ENCODE measurements at regions of chr11 and their contacts with region 1.

Region 1: DNA sequence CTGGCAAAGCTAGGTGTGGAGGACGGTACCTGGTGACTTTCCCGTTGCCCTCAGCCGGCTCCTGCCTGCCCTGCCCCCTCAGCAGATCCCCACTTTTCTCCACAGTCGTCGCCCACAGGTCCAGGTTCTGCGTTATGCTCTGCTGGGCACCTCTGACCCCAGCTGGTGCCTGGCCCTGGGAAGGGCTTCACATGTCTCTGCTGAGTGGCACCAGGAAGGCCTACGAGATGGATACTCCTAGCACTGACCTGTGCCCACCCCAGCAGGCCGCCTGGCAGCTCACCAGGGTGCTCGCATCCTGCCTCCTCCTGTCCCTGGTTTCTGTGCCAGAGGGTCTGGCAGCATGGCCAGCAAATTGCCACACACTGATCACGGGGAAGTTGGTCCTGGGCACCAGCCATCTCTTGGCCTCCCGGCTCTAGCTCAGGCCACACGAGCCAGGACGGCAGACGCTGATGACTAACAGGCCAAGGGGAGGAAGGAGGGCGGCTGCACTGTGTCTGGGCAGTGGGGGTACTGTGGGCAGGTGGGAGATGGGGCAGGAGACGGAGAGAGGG is 13.8 kb downstream of the CARS1 start:
- DNase-seq: peak; percentile 91 to 99
- ATAC-seq: peak; percentile 63 to 65
- H3K4me3 ChIP-seq: peak overlapping the region in 2 of 4 donors; percentile 25 to 33
- H3K27ac ChIP-seq: peak overlapping the region; percentile 92 to 99 (median 98)
- H3K4me1 ChIP-seq: peaks cover 49 to 60% of the 10 kb centered on the region in 2 donors
- H3K27me3 ChIP-seq: no peaks in the 10 kb centered on the region
- CTCF ChIP-seq: no peak
- POLR2A ChIP-seq: peak in 1 of 2 donors; percentile 4

Region 2: DNA sequence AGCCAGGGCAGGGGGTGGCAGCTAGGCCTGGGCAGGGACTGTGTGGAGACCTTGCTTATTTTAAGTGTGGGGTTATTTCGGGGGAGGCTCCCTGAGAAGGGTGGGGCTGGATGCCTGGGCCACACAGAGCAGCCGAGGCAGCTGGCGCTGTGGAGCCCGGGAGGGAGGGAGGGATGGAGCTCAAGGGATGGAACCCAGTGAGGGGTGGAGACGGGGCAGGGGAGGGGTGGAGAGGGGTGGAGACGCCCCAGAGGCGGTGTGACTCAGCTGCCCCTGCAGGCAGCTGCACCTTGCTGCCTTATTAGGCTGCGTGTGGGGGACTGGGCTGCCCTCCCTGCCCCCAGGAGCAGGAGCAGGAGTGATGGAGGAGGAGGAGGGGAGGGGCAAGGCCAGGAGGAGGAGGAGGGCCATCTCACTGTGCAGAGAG is 652.7 kb before region 1 on chr11:
- in situ Hi-C with region 1: no loop called
- intact Hi-C with region 1: loop called (anchors 5 kb)
- DNase-seq: peak; percentile 27 to 65
- ATAC-seq: peak in 1 of 2 donors; percentile 5
- H3K4me3 ChIP-seq: no peak overlapping the region
- H3K27ac ChIP-seq: peak overlapping the region; percentile 82 to 89 (median 86)
- H3K4me1 ChIP-seq: peaks cover 53 to 56% of the 10 kb centered on the region in 2 donors
- H3K27me3 ChIP-seq: no peaks in the 10 kb centered on the region
- CTCF ChIP-seq: no peak
- POLR2A ChIP-seq: no peak

Region 3: GRCh38 chr11:2991452-2992233 is 51.8 kb before region 1 on chr11:
- in situ Hi-C with region 1: no loop called
- intact Hi-C with region 1: loop called (anchors 2 kb)
- DNase-seq: peak in 1 of 2 donors; percentile 32
- ATAC-seq: peak; percentile 68 to 79
- H3K4me3 ChIP-seq: peak overlapping the region; percentile 76 to 92 (median 88)
- H3K27ac ChIP-seq: peak overlapping the region; percentile 87 to 98 (median 96)
- H3K4me1 ChIP-seq: peaks cover 46 to 57% of the 10 kb centered on the region in 2 donors
- H3K27me3 ChIP-seq: no peaks in the 10 kb centered on the region
- CTCF ChIP-seq: peak in 1 of 5 experiments; percentile 11
- POLR2A ChIP-seq: no peak

Region 4: DNA sequence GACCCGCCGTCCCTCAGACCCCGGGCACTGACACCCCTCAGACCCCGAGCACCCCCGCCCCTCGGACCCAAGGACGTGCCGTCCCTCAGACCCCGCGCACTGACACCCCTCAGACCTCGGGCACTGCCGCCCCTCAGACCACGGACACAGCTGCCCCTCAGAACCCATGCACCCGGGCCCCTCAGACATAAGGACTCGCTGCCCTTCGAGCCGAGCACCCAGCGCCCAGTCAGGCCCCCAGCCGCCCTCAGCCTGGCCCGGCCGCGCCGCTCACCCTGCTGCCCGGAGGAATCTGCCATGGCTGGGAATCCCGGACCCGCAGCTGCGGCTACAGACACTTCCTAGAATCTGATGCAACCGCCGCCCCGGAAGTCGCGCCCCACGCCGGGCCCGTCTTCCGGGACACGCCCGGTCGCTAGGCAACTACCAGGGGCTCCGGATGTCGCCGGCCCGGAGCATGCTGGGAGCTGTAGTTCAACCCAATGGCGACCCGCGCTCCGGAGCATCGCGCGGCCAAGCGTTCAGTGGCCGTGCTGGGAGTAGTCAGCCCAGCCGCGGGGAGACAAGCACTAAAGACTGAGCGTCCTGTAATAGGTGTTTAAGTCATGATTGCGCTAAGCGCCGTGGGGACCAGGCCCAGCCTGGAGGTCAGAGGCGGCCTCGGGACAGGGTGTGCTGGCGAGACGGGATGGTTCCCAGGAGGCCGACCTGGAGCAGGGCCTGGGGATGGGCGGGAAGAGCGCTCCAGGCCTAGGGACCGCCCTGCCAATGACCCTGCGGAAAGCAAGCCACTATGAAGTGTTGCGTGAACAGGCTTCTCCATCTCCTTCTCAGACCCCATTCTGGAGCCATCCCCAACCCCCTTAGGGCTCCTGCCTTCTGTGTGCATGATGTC is 13.9 kb after region 1 on chr11 and contains the start of gene CARS1:
- in situ Hi-C with region 1: no loop called
- intact Hi-C with region 1: loop called (anchors 1 kb)
- DNase-seq: peak; percentile 93 to 95
- ATAC-seq: peak; percentile 93 to 94
- H3K4me3 ChIP-seq: peak within 1 kb of the TSS; percentile 69 to 99 (median 92)
- H3K27ac ChIP-seq: peak within 1 kb of the TSS; percentile 87 to 97 (median 94)
- H3K4me1 ChIP-seq: peaks cover 14 to 22% of the 10 kb centered on the region in 2 donors
- H3K27me3 ChIP-seq: no peaks in the 10 kb centered on the region
- CTCF ChIP-seq: peak in 1 of 5 experiments; percentile 18
- POLR2A ChIP-seq: peak; percentile 77 to 82
- total RNA-seq, gene CARS1: 31.5 to 46.5 (median 34.7) TPM

Region 5: GRCh38 chr11:3081386-3081751 is 38.0 kb after region 1 on chr11:
- in situ Hi-C with region 1: no loop called
- intact Hi-C with region 1: no loop called
- DNase-seq: no peak
- ATAC-seq: no peak
- H3K4me3 ChIP-seq: no peak overlapping the region
- H3K27ac ChIP-seq: no peak overlapping the region
- H3K4me1 ChIP-seq: no peaks in the 10 kb centered on the region
- H3K27me3 ChIP-seq: peaks cover 0 to 4% (median 3%) of the 10 kb centered on the region in 3 donors
- CTCF ChIP-seq: no peak
- POLR2A ChIP-seq: no peak

Region 6: DNA sequence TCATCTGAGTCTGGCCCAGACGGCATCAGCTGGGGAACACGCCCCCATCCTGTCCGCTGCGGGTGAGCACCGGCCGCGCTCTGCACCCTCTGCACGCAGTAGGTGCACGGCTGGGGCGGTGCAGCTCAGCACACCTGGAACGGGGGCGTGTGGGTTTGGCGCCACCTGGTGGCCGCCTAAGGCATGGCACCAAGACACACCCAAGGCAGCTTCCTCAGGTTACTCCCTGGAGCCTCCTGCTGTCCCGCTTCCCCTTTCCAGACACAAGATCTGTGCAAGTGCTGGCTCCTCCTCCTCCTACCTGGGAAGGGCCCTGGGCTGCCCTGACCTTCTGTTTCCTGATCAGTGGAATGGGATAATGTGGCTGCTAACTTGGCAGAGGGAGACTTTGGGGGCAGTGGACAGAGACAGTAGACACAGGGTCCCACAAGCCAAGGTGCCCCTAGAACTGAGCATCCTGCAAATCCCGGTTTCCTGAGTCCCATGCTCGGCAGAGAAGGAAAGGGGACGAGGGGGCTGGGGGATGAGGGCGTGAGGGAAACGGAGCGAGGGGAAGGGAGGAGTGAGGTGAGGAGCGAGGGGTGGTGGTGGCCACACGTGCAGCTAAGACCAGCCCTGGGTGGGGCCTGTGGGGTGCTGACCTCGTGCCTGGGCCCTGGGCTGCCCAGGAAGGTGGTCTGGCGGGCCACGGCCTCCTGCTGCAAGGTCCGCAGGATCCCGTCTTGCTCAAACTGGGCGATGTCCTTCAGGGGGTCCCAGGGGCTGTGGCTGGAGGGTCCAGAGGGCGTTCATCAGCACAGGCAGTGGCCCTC is 48.6 kb after region 1 on chr11:
- in situ Hi-C with region 1: loop called (anchors 5 to 10 kb)
- intact Hi-C with region 1: no loop called
- DNase-seq: peak; percentile 38 to 74
- ATAC-seq: peak; percentile 77 to 82
- H3K4me3 ChIP-seq: no peak overlapping the region
- H3K27ac ChIP-seq: no peak overlapping the region
- H3K4me1 ChIP-seq: peaks cover 6 to 20% of the 10 kb centered on the region in 2 donors
- H3K27me3 ChIP-seq: no peaks in the 10 kb centered on the region
- CTCF ChIP-seq: peak; percentile 98 to 100 (median 100)
- POLR2A ChIP-seq: no peak

Region 7: DNA sequence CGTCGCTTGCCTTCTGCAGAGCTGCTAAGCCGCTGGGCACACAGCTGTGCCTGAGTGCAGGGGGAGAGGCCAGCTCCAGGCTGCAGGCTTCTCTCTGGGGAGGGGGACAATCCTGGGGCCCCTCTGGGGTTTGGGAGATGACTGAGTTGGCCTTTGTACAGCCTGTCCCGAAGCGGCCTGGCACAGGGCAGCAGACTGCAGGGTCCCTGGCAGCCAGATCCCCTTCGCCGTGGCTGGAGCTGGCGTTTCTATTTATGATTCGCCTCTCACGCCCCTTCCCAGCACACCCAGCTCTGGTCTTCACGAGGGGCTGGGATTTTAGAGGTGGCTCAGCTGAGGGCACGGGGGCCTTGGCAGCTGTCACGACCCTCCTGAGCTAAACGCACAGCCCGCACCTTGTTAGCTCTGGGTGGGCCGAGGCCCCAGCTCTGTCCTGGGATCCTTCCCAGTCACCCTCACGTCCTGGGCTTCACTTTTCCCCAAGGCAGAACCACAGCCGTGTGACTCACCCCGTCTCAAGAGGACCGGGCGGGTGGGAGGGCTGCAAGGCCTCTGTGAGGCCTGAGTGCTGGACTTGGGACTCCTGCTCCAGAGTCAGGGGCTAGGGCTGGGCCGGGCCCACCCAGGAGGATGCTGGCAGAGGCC is 103.3 kb after region 1 on chr11:
- in situ Hi-C with region 1: no loop called
- intact Hi-C with region 1: no loop called
- DNase-seq: no peak
- ATAC-seq: peak; percentile 63 to 80
- H3K4me3 ChIP-seq: no peak overlapping the region
- H3K27ac ChIP-seq: peak overlapping the region; percentile 59 to 75 (median 70)
- H3K4me1 ChIP-seq: peaks cover 20 to 24% of the 10 kb centered on the region in 2 donors
- H3K27me3 ChIP-seq: no peaks in the 10 kb centered on the region
- CTCF ChIP-seq: no peak
- POLR2A ChIP-seq: no peak

Region 8: GRCh38 chr11:3195251-3196160 is 152.1 kb after region 1 on chr11:
- in situ Hi-C with region 1: no loop called
- intact Hi-C with region 1: no loop called
- DNase-seq: no peak
- ATAC-seq: peak in 1 of 2 donors; percentile 45
- H3K4me3 ChIP-seq: no peak overlapping the region
- H3K27ac ChIP-seq: no peak overlapping the region
- H3K4me1 ChIP-seq: no peaks in the 10 kb centered on the region
- H3K27me3 ChIP-seq: peaks cover 0 to 6% (median under 1%) of the 10 kb centered on the region in 3 donors
- CTCF ChIP-seq: peak in 2 of 5 experiments; percentile 29 to 44
- POLR2A ChIP-seq: no peak

Region 9: DNA sequence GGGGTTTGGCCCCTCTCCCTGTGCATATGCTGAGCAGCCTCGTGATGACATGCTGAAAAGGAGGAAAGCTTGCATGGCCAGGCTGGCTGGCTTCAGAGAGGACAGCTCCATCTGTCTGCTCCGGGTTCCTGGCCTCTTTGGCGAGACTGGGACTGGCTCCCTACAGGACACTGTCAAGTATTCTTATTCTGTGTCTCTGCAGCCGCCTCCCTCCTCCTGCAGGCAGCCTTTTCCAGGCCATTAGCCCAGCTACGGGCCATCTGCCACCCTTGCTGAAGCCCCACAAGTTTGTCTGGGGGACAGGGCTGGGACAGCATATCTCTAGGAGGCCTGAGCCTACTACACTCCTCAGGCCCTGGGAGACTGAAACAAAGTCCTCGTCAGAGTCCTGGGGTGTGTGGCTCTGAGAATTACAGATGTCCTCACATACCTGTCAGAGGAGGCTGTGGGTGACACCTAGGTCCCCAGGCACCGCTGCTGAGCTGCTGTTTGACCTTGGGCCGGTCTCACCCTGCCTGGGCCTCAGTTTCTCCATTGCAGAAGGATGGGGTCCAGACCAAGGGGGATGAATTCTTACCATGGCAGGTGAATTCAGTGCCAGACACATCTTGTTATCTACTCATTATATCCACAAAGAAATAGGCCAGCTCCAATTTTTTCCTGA is 164.3 kb after region 1 on chr11:
- in situ Hi-C with region 1: no loop called
- intact Hi-C with region 1: no loop called
- DNase-seq: no peak
- ATAC-seq: no peak
- H3K4me3 ChIP-seq: no peak overlapping the region
- H3K27ac ChIP-seq: no peak overlapping the region
- H3K4me1 ChIP-seq: no peaks in the 10 kb centered on the region
- H3K27me3 ChIP-seq: peaks cover 13 to 22% (median 15%) of the 10 kb centered on the region in 3 donors
- CTCF ChIP-seq: no peak
- POLR2A ChIP-seq: no peak